ENCODE measurements at regions of chr1 and their contacts with region 1.

Region 1: GRCh38 chr1:30929135-30929889 is 20.8 kb upstream of the SDC3 start:
- DNase-seq: peak; percentile 73
- H3K4me3 Mint-ChIP-seq: no peak overlapping the region
- H3K27ac Mint-ChIP-seq: peak overlapping the region; percentile 49
- H3K4me1 Mint-ChIP-seq: peaks cover 14% of the 10 kb centered on the region
- H3K27me3 Mint-ChIP-seq: no peaks in the 10 kb centered on the region
- CTCF ChIP-seq: peak; percentile 68

Region 2: DNA sequence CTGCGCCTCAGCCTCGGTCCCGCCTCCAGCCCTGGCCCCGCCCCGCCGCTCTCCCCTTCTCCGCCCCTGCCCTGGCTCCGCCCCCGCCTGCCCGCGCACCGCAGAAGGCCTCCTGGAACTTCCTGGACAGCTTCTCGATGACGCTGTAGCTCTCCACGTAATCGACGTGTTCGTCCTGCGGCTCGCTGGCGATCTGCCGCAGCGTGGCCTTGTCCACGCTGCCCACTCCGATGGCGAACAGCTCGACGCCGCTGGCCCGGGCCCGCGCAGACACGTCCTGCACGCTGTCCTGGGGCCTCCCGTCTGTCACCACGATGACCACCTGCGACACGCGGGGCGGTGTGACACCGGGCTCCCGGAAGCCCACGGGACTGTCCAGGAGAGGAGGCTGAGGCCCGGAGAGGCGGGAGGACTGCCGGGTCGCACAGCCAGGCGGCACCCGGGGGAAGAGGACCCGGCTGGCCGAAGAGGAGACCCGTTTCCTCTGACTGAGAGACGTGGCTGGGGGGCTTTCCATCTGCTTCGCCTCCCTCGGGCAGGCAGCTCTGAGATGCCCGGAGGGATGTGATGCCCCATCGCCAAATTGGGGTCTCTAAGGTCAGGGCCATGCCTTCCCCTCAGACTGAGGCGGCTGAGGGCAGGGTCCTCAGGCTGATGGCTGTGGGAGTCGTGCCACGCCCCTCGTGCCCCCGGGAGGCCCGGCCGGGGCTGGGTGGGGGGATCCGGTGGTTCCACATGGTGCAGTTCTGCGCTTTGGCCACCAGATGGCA is 210.5 kb before region 1 on chr1:
- CTCF ChIA-PET with region 1: interaction called, 19 read pairs
- POLR2A ChIA-PET with region 1: interaction called, 6 read pairs
- intact Hi-C with region 1: loop called (anchors 5 kb)
- DNase-seq: peak; percentile 96
- H3K4me3 Mint-ChIP-seq: peak overlapping the region; percentile 89
- H3K27ac Mint-ChIP-seq: peak overlapping the region; percentile 91
- H3K4me1 Mint-ChIP-seq: peaks cover 5% of the 10 kb centered on the region
- H3K27me3 Mint-ChIP-seq: no peaks in the 10 kb centered on the region
- CTCF ChIP-seq: peak; percentile 96

Region 3: GRCh38 chr1:30779294-30780071 is 149.8 kb before region 1 on chr1:
- CTCF ChIA-PET with region 1: interaction called, 13 read pairs
- POLR2A ChIA-PET with region 1: interaction called, 9 read pairs
- intact Hi-C with region 1: no loop called
- DNase-seq: peak; percentile 80
- H3K4me3 Mint-ChIP-seq: no peak overlapping the region
- H3K27ac Mint-ChIP-seq: peak overlapping the region; percentile 14
- H3K4me1 Mint-ChIP-seq: peaks cover 30% of the 10 kb centered on the region
- H3K27me3 Mint-ChIP-seq: no peaks in the 10 kb centered on the region
- CTCF ChIP-seq: peak; percentile 94

Region 4: GRCh38 chr1:30790850-30791778 is 138.2 kb before region 1 on chr1:
- CTCF ChIA-PET with region 1: interaction called, 11 read pairs
- POLR2A ChIA-PET with region 1: interaction called, 3 read pairs
- intact Hi-C with region 1: loop called (anchors 5 kb)
- DNase-seq: no peak
- H3K4me3 Mint-ChIP-seq: no peak overlapping the region
- H3K27ac Mint-ChIP-seq: peak overlapping the region; percentile 100
- H3K4me1 Mint-ChIP-seq: peaks cover 48% of the 10 kb centered on the region
- H3K27me3 Mint-ChIP-seq: no peaks in the 10 kb centered on the region
- CTCF ChIP-seq: no peak

Region 5: DNA sequence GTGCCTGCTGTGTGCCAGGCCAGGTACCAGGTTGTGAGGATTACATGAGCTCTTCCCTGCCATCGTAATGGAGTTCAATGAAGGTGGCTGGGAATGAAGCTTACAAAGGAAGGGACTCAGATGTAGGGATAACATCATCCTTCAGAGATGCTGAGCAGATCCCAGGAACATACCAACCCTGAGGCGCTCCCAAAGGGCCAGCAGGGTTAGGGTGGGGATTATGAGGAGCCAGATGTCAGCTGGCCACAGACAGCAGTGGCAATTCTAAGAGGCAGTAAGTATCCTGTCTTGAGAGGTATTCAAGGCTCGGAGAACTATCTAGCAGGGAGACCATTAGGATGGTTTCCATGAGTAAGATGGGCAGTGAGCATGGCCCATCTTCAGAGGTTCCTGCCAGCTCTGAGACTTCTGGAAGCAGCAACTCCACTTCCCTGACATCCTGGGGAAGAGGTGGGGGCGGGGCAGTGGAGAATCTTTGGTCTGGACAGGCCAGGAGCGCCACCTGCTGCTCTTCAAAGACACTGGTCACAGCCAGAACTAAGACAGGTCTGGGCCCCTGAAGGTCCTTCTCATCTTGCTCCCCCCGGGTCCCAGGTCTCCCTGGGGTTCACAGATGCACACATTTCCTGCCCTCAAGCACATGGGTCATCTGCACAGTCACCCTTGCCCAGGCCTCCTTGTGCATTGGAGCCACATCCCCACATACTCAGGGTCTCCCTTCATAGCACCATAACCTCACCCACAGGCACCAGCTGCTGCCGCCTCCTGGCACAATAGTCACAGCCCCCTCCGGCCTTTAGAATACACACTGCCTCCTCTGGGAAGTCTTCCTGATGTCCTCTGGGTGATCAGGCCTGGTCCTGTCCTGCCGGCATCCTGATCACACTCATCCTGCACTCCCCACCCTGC is 18.0 kb before region 1 on chr1:
- CTCF ChIA-PET with region 1: interaction called, 18 read pairs
- POLR2A ChIA-PET with region 1: interaction called, 5 read pairs
- intact Hi-C with region 1: no loop called
- DNase-seq: peak; percentile 91
- H3K4me3 Mint-ChIP-seq: no peak overlapping the region
- H3K27ac Mint-ChIP-seq: no peak overlapping the region
- H3K4me1 Mint-ChIP-seq: peaks cover 15% of the 10 kb centered on the region
- H3K27me3 Mint-ChIP-seq: no peaks in the 10 kb centered on the region
- CTCF ChIP-seq: peak; percentile 85

Region 6: GRCh38 chr1:30919025-30919881 is 10.1 kb before region 1 on chr1:
- CTCF ChIA-PET with region 1: interaction called, 22 read pairs
- POLR2A ChIA-PET with region 1: interaction called, 34 read pairs
- intact Hi-C with region 1: no loop called
- DNase-seq: peak; percentile 62
- H3K4me3 Mint-ChIP-seq: no peak overlapping the region
- H3K27ac Mint-ChIP-seq: no peak overlapping the region
- H3K4me1 Mint-ChIP-seq: no peaks in the 10 kb centered on the region
- H3K27me3 Mint-ChIP-seq: no peaks in the 10 kb centered on the region
- CTCF ChIP-seq: no peak

Region 7: GRCh38 chr1:30942326-30942963 is 13.1 kb after region 1 on chr1:
- CTCF ChIA-PET with region 1: interaction called, 5 read pairs
- POLR2A ChIA-PET with region 1: interaction called, 14 read pairs
- intact Hi-C with region 1: no loop called
- DNase-seq: no peak
- H3K4me3 Mint-ChIP-seq: no peak overlapping the region
- H3K27ac Mint-ChIP-seq: no peak overlapping the region
- H3K4me1 Mint-ChIP-seq: peaks cover 7% of the 10 kb centered on the region
- H3K27me3 Mint-ChIP-seq: no peaks in the 10 kb centered on the region
- CTCF ChIP-seq: no peak